Calu3 (cell line): ENCODE measurements at regions of chr20 and their contacts with region 1.

Region 1: GRCh38 chr20:48188657-48189551 is 403.6 kb upstream of the SULF2 start:
- DNase-seq: peak; percentile 52
- H3K4me3 Mint-ChIP-seq: no peak overlapping the region
- H3K27ac Mint-ChIP-seq: no peak overlapping the region
- H3K4me1 Mint-ChIP-seq: peaks cover 16% of the 10 kb centered on the region
- H3K27me3 Mint-ChIP-seq: no peaks in the 10 kb centered on the region
- CTCF ChIP-seq: peak; percentile 53

Region 2: GRCh38 chr20:47857566-47858471 is 331.1 kb before region 1 on chr20:
- CTCF ChIA-PET with region 1: interaction called, 12 read pairs
- intact Hi-C with region 1: no loop called
- DNase-seq: no peak
- H3K4me3 Mint-ChIP-seq: no peak overlapping the region
- H3K27ac Mint-ChIP-seq: peak overlapping the region; percentile 40
- H3K4me1 Mint-ChIP-seq: peaks cover 30% of the 10 kb centered on the region
- H3K27me3 Mint-ChIP-seq: peaks cover 2% of the 10 kb centered on the region
- CTCF ChIP-seq: no peak

Region 3: GRCh38 chr20:47985092-47985850 is 203.6 kb before region 1 on chr20:
- CTCF ChIA-PET with region 1: no interaction called
- intact Hi-C with region 1: loop called (anchors 10 kb)
- DNase-seq: peak; percentile 60
- H3K4me3 Mint-ChIP-seq: no peak overlapping the region
- H3K27ac Mint-ChIP-seq: peak overlapping the region; percentile 27
- H3K4me1 Mint-ChIP-seq: peaks cover 44% of the 10 kb centered on the region
- H3K27me3 Mint-ChIP-seq: no peaks in the 10 kb centered on the region
- CTCF ChIP-seq: no peak

Region 4: DNA sequence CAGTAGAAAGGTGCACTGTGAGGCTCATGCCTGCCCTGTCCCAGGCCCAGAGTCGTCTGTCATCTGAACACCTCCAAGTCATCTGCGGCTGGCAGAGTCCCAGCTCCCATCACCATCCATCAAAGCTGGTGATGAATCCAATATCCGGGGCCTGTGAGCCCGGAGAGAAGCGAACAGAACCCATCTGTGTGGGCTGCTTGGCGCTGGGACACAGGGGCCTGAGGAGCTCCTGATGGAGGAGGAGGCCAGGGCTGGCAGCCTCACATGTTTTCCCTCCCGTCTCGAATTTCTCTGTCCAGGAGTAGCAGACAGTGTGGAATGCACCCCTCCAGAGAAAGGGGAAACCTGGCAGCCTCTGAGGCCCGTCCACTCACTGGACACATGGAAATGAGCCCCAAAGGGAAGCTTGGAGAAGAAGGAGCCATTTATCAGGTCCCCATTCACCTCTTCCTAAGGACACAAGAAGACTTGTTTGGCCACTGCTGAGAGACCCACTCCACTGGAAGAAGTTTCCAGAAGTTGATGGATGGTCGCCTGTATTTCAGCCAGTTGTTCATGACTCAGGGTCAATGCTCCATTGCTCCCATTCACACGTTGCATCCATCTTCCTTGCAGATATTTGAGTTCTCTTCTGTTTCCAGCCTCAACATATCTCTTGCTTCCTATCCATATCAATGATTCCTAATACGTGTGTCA is 96.2 kb before region 1 on chr20:
- CTCF ChIA-PET with region 1: no interaction called
- intact Hi-C with region 1: no loop called
- DNase-seq: no peak
- H3K4me3 Mint-ChIP-seq: no peak overlapping the region
- H3K27ac Mint-ChIP-seq: no peak overlapping the region
- H3K4me1 Mint-ChIP-seq: no peaks in the 10 kb centered on the region
- H3K27me3 Mint-ChIP-seq: peaks cover 63% of the 10 kb centered on the region
- CTCF ChIP-seq: no peak

Region 5: DNA sequence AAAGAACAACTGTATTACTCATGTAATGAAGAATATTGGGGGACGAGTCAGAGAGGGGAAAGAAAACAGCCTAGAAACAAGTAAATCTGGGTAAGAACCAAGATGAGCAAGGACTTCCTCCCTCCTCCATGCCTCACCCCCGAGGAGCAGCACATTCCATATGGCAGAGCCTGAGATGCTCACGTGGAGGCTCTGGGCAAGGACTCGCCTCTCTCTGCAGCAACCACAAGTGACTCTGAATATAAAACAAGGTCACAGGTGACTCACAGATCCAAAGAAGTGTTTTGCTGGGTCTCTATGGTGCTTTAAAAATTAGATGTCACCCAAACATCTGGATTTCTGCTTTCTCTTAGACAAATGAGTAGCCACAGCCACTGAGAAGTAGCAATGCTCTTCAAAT is 49.4 kb after region 1 on chr20:
- CTCF ChIA-PET with region 1: no interaction called
- intact Hi-C with region 1: no loop called
- DNase-seq: no peak
- H3K4me3 Mint-ChIP-seq: no peak overlapping the region
- H3K27ac Mint-ChIP-seq: no peak overlapping the region
- H3K4me1 Mint-ChIP-seq: no peaks in the 10 kb centered on the region
- H3K27me3 Mint-ChIP-seq: peaks cover 63% of the 10 kb centered on the region
- CTCF ChIP-seq: no peak

Region 6: GRCh38 chr20:48283305-48284080 is 94.6 kb after region 1 on chr20:
- CTCF ChIA-PET with region 1: no interaction called
- intact Hi-C with region 1: loop called (anchors 10 kb)
- DNase-seq: peak; percentile 91
- H3K4me3 Mint-ChIP-seq: peak overlapping the region; percentile 2
- H3K27ac Mint-ChIP-seq: peak overlapping the region; percentile 51
- H3K4me1 Mint-ChIP-seq: peaks cover 55% of the 10 kb centered on the region
- H3K27me3 Mint-ChIP-seq: no peaks in the 10 kb centered on the region
- CTCF ChIP-seq: no peak